ENCODE measurements at regions of chr3 and their contacts with region 1.

Region 1: GRCh38 chr3:160003520-160004128 is 15.0 kb downstream of the IL12A start:
- DNase-seq: peak in 3 of 4 experiments; percentile 16 to 34 (median 22)
- ATAC-seq: peak; percentile 86
- H3K4me3 ChIP-seq: no peak overlapping the region
- H3K27ac ChIP-seq: no peak overlapping the region
- H3K4me1 ChIP-seq: no peaks in the 10 kb centered on the region
- H3K27me3 ChIP-seq: peaks cover 0 to 2% of the 10 kb centered on the region in 2 experiments; a peak in 1 of 5 replicates
- CTCF ChIP-seq: peak; percentile 35 to 50 (median 44); a peak in 5 of 6 replicates
- EP300 ChIP-seq: no peak
- POLR2A ChIP-seq: no peak
- RAD21 ChIP-seq: peak; percentile 26 to 51; a peak in 2 of 4 replicates

Region 2: DNA sequence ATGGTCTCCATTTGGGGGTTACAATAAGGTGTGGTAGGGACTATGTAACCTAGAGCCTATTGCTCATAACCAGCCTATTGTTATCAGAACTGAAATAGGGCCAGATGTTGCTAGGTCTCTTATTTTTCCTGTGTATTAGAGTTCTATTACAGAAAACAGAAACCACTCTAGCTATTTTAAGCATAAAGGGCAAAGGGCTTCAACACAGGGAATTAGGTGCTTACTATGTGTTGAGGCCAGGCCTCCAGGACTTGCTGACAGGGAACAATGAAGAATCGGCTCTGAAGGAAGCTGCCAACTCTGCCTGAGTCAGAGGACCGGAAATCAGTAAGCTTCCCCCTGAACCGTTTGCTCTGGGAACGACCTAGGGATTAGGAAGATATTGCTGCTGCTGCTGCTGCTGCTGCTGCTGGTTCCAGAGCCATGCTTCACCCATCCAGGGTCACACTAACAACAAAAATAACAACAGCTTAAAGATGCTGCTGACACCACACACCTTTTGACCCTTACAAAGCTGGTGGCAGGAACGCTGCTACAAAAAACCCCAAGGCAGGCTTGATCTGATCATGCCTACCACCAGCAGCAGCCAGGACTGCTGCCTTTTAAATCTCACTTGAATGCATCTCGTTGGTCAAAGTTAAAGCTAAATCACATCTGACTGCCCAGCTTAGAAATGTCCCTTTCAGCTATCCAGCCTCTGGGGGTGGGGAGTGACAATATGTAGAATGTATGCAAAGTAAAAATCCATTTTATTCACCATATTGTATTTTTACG is 291.9 kb before region 1 on chr3:
- CTCF ChIA-PET with region 1: no interaction called
- POLR2A ChIA-PET with region 1: no interaction called
- in situ Hi-C with region 1: no loop called
- intact Hi-C with region 1: no loop called
- DNase-seq: no peak
- ATAC-seq: no peak
- H3K4me3 ChIP-seq: no peak overlapping the region
- H3K27ac ChIP-seq: no peak overlapping the region
- H3K4me1 ChIP-seq: no peaks in the 10 kb centered on the region
- H3K27me3 ChIP-seq: no peaks in the 10 kb centered on the region
- CTCF ChIP-seq: no peak
- EP300 ChIP-seq: no peak
- POLR2A ChIP-seq: no peak
- RAD21 ChIP-seq: no peak

Region 3: DNA sequence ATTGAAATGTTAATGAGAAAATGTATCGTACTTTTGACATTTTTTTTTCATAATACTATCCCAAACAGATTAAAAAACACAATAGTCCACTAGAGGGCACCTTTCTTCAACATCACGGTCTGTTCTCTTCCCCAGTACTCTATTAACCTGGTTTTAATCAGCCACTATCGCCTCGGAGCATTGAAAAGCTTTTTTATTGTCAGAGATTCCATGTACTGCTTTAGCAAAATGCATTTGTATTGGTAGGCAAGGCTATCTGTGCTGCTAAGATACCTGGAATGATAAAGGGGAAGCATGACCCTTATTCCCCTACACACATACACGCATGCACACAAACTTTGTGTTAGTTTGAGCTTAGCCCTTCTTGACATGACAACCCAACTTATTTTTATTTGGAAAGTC is 175.1 kb before region 1 on chr3:
- CTCF ChIA-PET with region 1: no interaction called
- POLR2A ChIA-PET with region 1: no interaction called
- in situ Hi-C with region 1: no loop called
- intact Hi-C with region 1: loop called (anchors 10 kb)
- DNase-seq: peak; percentile 11 to 36 (median 30)
- ATAC-seq: peak; percentile 84
- H3K4me3 ChIP-seq: no peak overlapping the region
- H3K27ac ChIP-seq: no peak overlapping the region
- H3K4me1 ChIP-seq: no peaks in the 10 kb centered on the region
- H3K27me3 ChIP-seq: no peaks in the 10 kb centered on the region
- CTCF ChIP-seq: peak; percentile 20 to 57 (median 46); a peak in 4 of 6 replicates
- EP300 ChIP-seq: no peak
- POLR2A ChIP-seq: no peak
- RAD21 ChIP-seq: peak in 1 of 2 experiments; percentile 34; a peak in 3 of 4 replicates

Region 4: GRCh38 chr3:159919873-159920272 is 83.8 kb before region 1 on chr3:
- CTCF ChIA-PET with region 1: no interaction called
- POLR2A ChIA-PET with region 1: no interaction called
- in situ Hi-C with region 1: no loop called
- intact Hi-C with region 1: no loop called
- DNase-seq: no peak
- ATAC-seq: no peak
- H3K4me3 ChIP-seq: no peak overlapping the region
- H3K27ac ChIP-seq: no peak overlapping the region
- H3K4me1 ChIP-seq: no peaks in the 10 kb centered on the region
- H3K27me3 ChIP-seq: no peaks in the 10 kb centered on the region
- CTCF ChIP-seq: no peak
- EP300 ChIP-seq: no peak
- POLR2A ChIP-seq: no peak
- RAD21 ChIP-seq: no peak

Region 5: GRCh38 chr3:159988617-159989271 is 14.9 kb before region 1 on chr3 and contains the start of gene IL12A:
- CTCF ChIA-PET with region 1: no interaction called
- POLR2A ChIA-PET with region 1: no interaction called
- in situ Hi-C with region 1: no loop called
- intact Hi-C with region 1: loop called (anchors 2 kb)
- DNase-seq: peak; percentile 76 to 89 (median 82)
- ATAC-seq: peak; percentile 99
- H3K4me3 ChIP-seq: peak within 1 kb of the TSS; percentile 44
- H3K27ac ChIP-seq: no peak within 1 kb of the TSS
- H3K4me1 ChIP-seq: peaks cover 0 to 9% of the 10 kb centered on the region in 2 experiments; a peak in 2 of 5 replicates
- H3K27me3 ChIP-seq: peaks cover 3 to 17% of the 10 kb centered on the region in 2 experiments; a peak in 4 of 5 replicates
- CTCF ChIP-seq: peak; percentile 73 to 88 (median 81)
- EP300 ChIP-seq: no peak
- POLR2A ChIP-seq: no peak
- RAD21 ChIP-seq: peak; percentile 57 to 62
- polyA plus RNA-seq, gene IL12A: not detected

Region 6: GRCh38 chr3:160052385-160053047 is 48.9 kb after region 1 on chr3:
- CTCF ChIA-PET with region 1: no interaction called
- POLR2A ChIA-PET with region 1: no interaction called
- in situ Hi-C with region 1: no loop called
- intact Hi-C with region 1: no loop called
- DNase-seq: no peak
- ATAC-seq: no peak
- H3K4me3 ChIP-seq: no peak overlapping the region
- H3K27ac ChIP-seq: no peak overlapping the region
- H3K4me1 ChIP-seq: no peaks in the 10 kb centered on the region
- H3K27me3 ChIP-seq: peaks cover 4 to 7% of the 10 kb centered on the region in 2 experiments; a peak in 3 of 5 replicates
- CTCF ChIP-seq: no peak
- EP300 ChIP-seq: no peak
- POLR2A ChIP-seq: no peak
- RAD21 ChIP-seq: no peak

Measured in K562 (cell line).